ENCODE measurements at regions of chr15 and their contacts with region 1.

Region 1: GRCh38 chr15:98620020-98620419 is 28.3 kb upstream of the IGF1R start:
- DNase-seq: no peak
- ATAC-seq: no peak
- H3K4me3 ChIP-seq: no peak overlapping the region
- H3K27ac ChIP-seq: no peak overlapping the region
- H3K4me1 ChIP-seq: no peaks in the 10 kb centered on the region
- H3K27me3 ChIP-seq: peaks cover 32% of the 10 kb centered on the region
- CTCF ChIP-seq: no peak
- POLR2A ChIP-seq: no peak
- RAD21 ChIP-seq: no peak

Region 2: GRCh38 chr15:98581715-98582114 is 38.3 kb before region 1 on chr15:
- CTCF ChIA-PET with region 1: no interaction called
- POLR2A ChIA-PET with region 1: no interaction called
- dilution Hi-C with region 1: no loop called
- in situ Hi-C with region 1: no loop called
- intact Hi-C with region 1: loop called (anchors 5 kb)
- DNase-seq: no peak
- ATAC-seq: no peak
- H3K4me3 ChIP-seq: no peak overlapping the region
- H3K27ac ChIP-seq: no peak overlapping the region
- H3K4me1 ChIP-seq: peaks cover 1% of the 10 kb centered on the region; the same call in 1 of the 2 replicates
- H3K27me3 ChIP-seq: peaks cover 37% of the 10 kb centered on the region
- CTCF ChIP-seq: no peak
- POLR2A ChIP-seq: no peak
- RAD21 ChIP-seq: no peak